Activated CD8-positive, alpha-beta memory T cell treated with anti-CD3 and anti-CD28 coated beads, Interleukin-2, amount 10 ng/mL, durations not matched to agents 7 days and 5 days (primary cell): ENCODE measurements at regions of chr1 and their contacts with region 1.

Region 1: GRCh38 chr1:18100491-18101063 is 7.0 kb upstream of the IGSF21 start:
- DNase-seq: peak; percentile 42
- ATAC-seq: no peak
- H3K4me3 Mint-ChIP-seq: no peak overlapping the region
- H3K27ac Mint-ChIP-seq: no peak overlapping the region
- H3K4me1 Mint-ChIP-seq: no peaks in the 10 kb centered on the region
- H3K27me3 Mint-ChIP-seq: peaks cover 5% of the 10 kb centered on the region

Region 2: DNA sequence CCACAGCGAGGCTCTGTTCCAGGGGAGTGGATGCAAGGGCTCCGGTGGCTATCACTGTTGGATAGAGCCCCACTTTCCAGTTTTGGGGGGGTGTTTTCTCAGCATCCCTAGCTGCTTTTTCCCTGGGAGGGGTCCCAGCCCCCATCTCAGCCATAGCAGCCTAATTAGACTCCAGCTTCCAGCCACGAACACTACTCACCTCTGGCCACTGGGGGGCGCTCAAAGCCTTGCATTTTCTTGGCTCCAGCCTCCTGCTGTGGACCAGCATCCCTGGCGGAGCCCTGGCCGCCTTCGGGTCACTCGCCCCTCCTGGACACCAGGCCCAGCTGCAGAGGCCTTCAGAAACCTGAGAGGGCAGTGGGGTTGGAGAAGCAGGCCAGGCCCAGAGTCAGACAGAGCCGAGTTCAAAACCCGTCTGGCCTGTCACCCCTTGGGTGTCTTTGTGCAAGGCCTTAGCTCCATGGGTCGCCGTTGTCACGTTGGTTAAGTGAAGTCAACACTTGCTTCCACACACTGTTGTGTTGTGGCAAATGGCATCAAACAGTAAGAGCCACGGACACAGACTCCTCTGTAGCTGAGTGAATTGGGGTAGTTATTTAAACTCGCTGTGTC is 438.9 kb before region 1 on chr1:
- CTCF ChIA-PET with region 1: interaction called, 13 read pairs
- DNase-seq: peak; percentile 60
- ATAC-seq: peak; percentile 33
- H3K4me3 Mint-ChIP-seq: no peak overlapping the region
- H3K27ac Mint-ChIP-seq: no peak overlapping the region
- H3K4me1 Mint-ChIP-seq: no peaks in the 10 kb centered on the region
- H3K27me3 Mint-ChIP-seq: no peaks in the 10 kb centered on the region